Uterus (tissue), 4 donors: ENCODE measurements at regions of chr15 and their contacts with region 1.

Region 1: GRCh38 chr15:42920519-42921227 is at the start of gene TTBK2:
- DNase-seq: peak; percentile 99
- H3K4me3 ChIP-seq: peak within 1 kb of the TSS; percentile 87 to 97
- H3K27ac ChIP-seq: peak within 1 kb of the TSS; percentile 87 to 91
- H3K4me1 ChIP-seq: no peaks in the 10 kb centered on the region
- H3K27me3 ChIP-seq: no peaks in the 10 kb centered on the region
- CTCF ChIP-seq: peak; percentile 8 to 36 (median 23)
- POLR2A ChIP-seq: peak; percentile 26 to 78
- total RNA-seq, gene TTBK2: 5.9 to 32.3 (median 20.6) TPM

Region 2: GRCh38 chr15:42595626-42596240 is 324.9 kb before region 1 on chr15:
- intact Hi-C with region 1: no loop called
- DNase-seq: no peak
- H3K4me3 ChIP-seq: no peak overlapping the region
- H3K27ac ChIP-seq: peak overlapping the region; percentile 12 to 73
- H3K4me1 ChIP-seq: peaks cover 0 to 5% of the 10 kb centered on the region in 2 donors
- H3K27me3 ChIP-seq: no peaks in the 10 kb centered on the region
- CTCF ChIP-seq: no peak
- POLR2A ChIP-seq: no peak

Region 3: DNA sequence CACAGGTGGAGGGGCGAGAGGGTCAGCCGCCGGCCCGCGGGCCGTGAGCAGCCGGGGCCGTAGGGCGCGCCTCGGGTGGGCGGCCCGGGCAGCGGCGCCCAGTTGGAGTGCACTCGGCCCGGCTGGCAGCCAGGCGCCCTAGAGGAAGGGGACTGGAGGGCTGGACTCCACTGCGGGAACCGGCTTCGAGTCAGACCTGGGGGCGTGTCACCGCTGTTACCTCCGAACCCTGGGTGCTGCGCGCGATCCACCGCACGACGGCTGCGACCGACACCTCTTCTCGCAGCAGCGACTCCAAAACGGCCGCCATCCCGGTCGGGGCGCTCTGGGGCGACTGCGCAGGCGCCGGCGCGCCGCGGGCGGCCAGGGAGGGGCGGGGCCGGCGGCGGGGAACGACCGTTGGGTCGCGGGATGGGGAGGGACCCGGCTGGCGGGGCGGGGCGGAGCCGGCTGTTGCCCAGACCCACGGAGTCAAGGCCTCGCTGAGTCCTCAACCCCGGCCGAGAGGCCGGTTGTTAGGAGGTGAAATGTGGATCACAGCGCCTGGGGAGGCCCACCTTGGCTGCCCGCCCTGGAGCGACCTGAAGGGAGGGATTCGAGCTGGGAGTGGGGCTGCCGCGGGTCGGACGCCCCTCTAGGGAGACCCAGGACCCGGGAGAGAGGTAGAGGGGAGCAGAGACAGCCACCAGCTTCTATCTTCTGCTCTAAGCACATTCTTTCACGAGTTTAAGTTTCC is 183.7 kb before region 1 on chr15 and contains the start of gene CDAN1:
- intact Hi-C with region 1: loop called (anchors 10 kb)
- DNase-seq: peak; percentile 90 to 94
- H3K4me3 ChIP-seq: peak within 1 kb of the TSS; percentile 37 to 65
- H3K27ac ChIP-seq: peak within 1 kb of the TSS; percentile 91 to 95
- H3K4me1 ChIP-seq: peaks cover 0 to 4% of the 10 kb centered on the region in 2 donors
- H3K27me3 ChIP-seq: no peaks in the 10 kb centered on the region
- CTCF ChIP-seq: peak in 2 of 4 experiments; percentile 9 to 19
- POLR2A ChIP-seq: peak; percentile 71 to 91
- total RNA-seq, gene CDAN1: 11.3 to 31.2 (median 19.5) TPM